ENCODE measurements at regions of chr14 and their contacts with region 1.

Region 1: DNA sequence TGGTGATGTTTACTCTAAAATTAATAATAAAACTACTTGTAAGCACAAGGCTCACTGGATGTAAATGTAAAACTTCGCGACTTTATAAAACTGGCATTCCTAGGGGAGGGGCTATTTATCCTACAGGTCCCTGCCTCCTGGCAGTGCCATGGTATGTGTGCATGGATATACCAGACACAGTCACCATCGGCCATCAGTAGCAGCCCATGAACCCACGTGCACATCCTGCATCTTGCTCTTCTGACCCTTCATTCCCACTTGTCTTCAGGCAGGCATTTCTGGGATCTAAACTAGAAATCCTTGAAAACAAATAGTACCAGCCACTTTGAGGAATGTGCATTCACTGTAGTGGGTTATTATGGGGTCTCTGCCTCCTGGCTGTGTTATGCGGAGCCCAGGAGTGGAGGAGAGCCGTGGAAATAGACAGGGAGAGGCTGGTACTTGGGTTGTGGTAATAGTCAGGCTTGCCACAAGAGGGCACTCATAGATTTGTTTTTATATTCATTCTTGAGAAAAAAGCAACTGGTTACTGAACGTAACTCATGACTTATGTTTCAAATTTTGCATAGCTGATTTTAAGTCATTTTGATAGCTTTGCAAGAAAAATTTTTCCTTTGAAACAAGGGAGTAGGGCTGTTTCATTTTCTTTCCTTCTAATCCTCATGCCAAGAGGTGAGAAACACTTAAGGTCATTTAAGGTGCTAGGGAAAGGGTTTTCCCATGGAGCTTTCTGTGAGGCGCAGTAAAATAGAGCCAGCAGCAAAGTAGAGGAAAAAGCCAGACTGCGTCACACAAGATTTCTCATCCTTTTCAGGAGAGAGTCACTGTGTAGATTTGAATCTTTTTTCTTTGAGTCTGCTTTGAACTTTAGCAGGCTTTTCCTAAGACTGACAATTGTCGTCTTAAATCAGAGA is 17.4 kb upstream of the GALNT16 start:
- DNase-seq: peak; percentile 62
- H3K4me3 Mint-ChIP-seq: no peak overlapping the region
- H3K27ac Mint-ChIP-seq: no peak overlapping the region
- H3K4me1 Mint-ChIP-seq: no peaks in the 10 kb centered on the region
- H3K27me3 Mint-ChIP-seq: no peaks in the 10 kb centered on the region
- CTCF ChIP-seq: peak; percentile 63

Region 2: GRCh38 chr14:69226178-69226577 is 16.4 kb before region 1 on chr14:
- CTCF ChIA-PET with region 1: interaction called, 15 read pairs
- POLR2A ChIA-PET with region 1: interaction called, 3 read pairs
- intact Hi-C with region 1: no loop called
- DNase-seq: no peak
- H3K4me3 Mint-ChIP-seq: no peak overlapping the region
- H3K27ac Mint-ChIP-seq: no peak overlapping the region
- H3K4me1 Mint-ChIP-seq: peaks cover 5% of the 10 kb centered on the region
- H3K27me3 Mint-ChIP-seq: no peaks in the 10 kb centered on the region
- CTCF ChIP-seq: no peak

Region 3: GRCh38 chr14:69232388-69232787 is 10.2 kb before region 1 on chr14:
- CTCF ChIA-PET with region 1: interaction called, 15 read pairs
- POLR2A ChIA-PET with region 1: no interaction called
- intact Hi-C with region 1: no loop called
- DNase-seq: no peak
- H3K4me3 Mint-ChIP-seq: no peak overlapping the region
- H3K27ac Mint-ChIP-seq: no peak overlapping the region
- H3K4me1 Mint-ChIP-seq: no peaks in the 10 kb centered on the region
- H3K27me3 Mint-ChIP-seq: no peaks in the 10 kb centered on the region
- CTCF ChIP-seq: no peak

Region 4: DNA sequence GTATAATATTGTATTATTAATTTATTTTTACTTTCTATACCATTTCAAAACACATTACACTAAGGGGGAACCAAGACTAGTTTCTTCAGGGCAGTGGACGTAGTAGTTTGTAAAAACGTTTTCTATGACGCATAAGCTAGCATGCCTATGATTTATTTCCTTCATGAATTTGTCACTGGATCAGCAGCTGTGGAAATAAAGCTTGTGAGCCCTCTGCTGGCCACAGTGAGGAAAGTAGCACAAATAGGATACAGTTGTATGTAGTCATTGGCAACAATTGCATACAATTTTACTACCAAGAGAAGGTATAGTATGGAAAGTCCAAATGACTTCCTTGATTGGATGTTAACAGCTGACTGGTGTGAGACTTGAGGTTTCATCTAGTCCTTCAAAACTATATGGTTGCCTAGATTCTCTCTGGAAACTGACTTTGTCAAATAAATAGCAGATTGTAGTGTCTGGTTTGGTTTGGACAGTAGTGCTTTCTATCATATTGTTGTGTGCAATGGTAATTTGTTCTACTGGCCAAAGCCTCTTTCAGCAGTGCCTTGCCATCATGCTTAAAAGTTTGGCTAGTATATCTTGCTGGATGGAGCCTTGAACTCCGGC is 217.6 kb after region 1 on chr14:
- CTCF ChIA-PET with region 1: interaction called, 86 read pairs
- POLR2A ChIA-PET with region 1: interaction called, 5 read pairs
- intact Hi-C with region 1: loop called (anchors 1 kb)
- DNase-seq: peak; percentile 85
- H3K4me3 Mint-ChIP-seq: no peak overlapping the region
- H3K27ac Mint-ChIP-seq: no peak overlapping the region
- H3K4me1 Mint-ChIP-seq: no peaks in the 10 kb centered on the region
- H3K27me3 Mint-ChIP-seq: no peaks in the 10 kb centered on the region
- CTCF ChIP-seq: peak; percentile 70